ENCODE measurements at regions of chr12 and their contacts with region 1.

Region 1: DNA sequence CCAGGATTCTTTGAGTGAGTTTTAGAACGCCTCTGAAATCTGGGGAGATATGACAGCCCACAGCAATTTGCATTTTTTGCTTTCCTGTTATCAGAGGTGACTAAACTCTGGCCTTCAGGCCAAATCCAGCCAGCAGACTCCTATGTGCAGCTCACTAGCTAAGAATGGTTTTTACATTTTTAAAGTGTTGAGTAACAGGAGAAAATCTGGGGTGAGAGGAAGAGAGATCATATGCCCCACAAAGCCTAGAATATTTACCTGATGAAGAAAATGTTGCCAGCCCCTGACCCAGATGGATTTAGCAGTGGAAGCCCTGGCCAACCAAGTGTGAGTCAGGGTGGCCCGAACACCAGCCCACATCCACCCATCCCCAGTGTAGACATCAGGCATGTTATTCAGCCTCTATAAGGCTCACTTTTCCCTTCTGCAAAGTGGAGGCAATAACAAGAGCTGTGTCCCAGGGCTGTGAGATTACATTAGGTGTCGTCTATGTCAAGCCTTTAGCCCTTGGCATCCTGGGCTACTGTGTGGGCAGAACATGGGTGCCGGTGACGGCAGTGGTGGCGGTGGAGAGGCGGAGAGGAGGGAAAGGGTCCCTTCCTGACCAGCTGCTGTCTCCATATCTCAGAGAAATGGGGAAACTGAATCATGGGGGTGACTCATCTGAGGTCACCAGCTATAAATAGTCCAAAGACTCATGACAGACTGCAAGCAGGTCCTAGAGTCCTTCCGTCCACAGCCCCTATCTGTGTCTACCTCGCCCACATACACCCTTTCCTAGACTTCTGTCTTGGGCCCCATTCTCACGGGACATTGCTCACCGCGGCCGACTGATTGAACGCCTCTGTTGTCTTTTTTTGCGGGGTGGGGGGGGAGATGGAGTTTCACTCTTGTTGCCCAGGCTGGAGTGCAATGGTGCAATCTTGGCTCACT is 32.6 kb upstream of the CD9 start:
- DNase-seq: peak; percentile 99
- H3K4me3 ChIP-seq: peak overlapping the region in 1 of 3 experiments; percentile 3
- H3K27ac ChIP-seq: peak overlapping the region; percentile 100
- H3K4me1 ChIP-seq: peaks cover 49% of the 10 kb centered on the region
- H3K27me3 ChIP-seq: no peaks in the 10 kb centered on the region
- CTCF ChIP-seq: no peak
- POLR2A ChIP-seq: peak; percentile 76

Region 2: GRCh38 chr12:6020926-6021325 is 146.7 kb before region 1 on chr12:
- CTCF ChIA-PET with region 1: no interaction called
- POLR2A ChIA-PET with region 1: no interaction called
- dilution Hi-C with region 1: no loop called
- intact Hi-C with region 1: no loop called
- DNase-seq: peak; percentile 60
- H3K4me3 ChIP-seq: no peak overlapping the region
- H3K27ac ChIP-seq: peak overlapping the region; percentile 7
- H3K4me1 ChIP-seq: peaks cover 5% of the 10 kb centered on the region
- H3K27me3 ChIP-seq: no peaks in the 10 kb centered on the region
- CTCF ChIP-seq: no peak
- POLR2A ChIP-seq: no peak

Region 3: GRCh38 chr12:6074979-6075585 is 92.5 kb before region 1 on chr12:
- CTCF ChIA-PET with region 1: interaction called, 15 read pairs
- POLR2A ChIA-PET with region 1: interaction called, 5 read pairs
- dilution Hi-C with region 1: no loop called
- intact Hi-C with region 1: loop called (anchors 1 kb)
- DNase-seq: peak; percentile 49
- H3K4me3 ChIP-seq: no peak overlapping the region
- H3K27ac ChIP-seq: peak overlapping the region; percentile 80
- H3K4me1 ChIP-seq: peaks cover 86% of the 10 kb centered on the region
- H3K27me3 ChIP-seq: no peaks in the 10 kb centered on the region
- CTCF ChIP-seq: peak in 1 of 2 donors; percentile 5
- POLR2A ChIP-seq: peak; percentile 67

Region 4: DNA sequence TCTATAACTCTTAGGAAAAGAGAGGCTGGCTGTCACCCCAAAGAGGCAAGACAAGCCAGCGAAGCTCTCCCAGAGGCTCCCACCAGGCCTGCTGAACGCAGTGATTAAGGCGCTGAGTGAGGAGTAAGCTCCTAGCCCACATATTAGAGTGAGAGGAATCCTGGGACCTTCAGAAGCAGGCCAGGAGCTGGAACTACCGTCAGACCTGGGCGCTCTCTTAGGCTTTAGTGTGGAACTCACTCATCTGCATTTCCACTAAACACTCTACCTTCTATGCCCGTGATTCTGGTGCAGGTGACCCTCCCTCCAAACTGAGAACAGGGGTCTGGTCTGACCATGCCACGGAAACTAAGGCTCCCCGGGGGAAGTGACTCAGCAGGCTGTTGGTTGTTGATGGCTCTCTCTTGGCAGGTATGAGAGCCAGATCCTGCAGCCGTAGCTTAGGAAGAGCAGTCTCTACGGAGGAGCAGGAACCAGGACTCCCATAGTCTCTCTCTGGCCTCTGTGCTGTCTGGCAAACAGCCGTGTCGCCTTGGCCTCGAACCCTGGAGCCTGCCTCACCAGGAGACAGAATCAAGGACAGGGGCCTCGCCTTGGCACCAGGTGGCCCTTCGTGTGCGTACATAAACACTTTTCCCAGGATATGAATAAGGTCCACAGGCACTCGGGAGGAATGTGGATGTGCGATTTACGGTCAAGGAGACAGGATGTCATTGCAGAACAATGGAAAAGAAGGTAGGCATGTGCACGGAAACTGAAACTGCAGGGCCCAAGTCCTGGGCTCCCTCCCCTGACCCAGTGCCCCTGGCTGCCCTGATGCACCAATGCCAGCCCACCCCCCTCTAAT is 51.2 kb before region 1 on chr12:
- CTCF ChIA-PET with region 1: interaction called, 43 read pairs
- POLR2A ChIA-PET with region 1: interaction called, 13 read pairs
- dilution Hi-C with region 1: no loop called
- intact Hi-C with region 1: loop called (anchors 1 kb)
- DNase-seq: peak; percentile 95
- H3K4me3 ChIP-seq: peak overlapping the region in 1 of 3 experiments; percentile 0
- H3K27ac ChIP-seq: peak overlapping the region; percentile 100
- H3K4me1 ChIP-seq: peaks cover 91% of the 10 kb centered on the region
- H3K27me3 ChIP-seq: no peaks in the 10 kb centered on the region
- CTCF ChIP-seq: no peak
- POLR2A ChIP-seq: peak; percentile 77

Region 5: DNA sequence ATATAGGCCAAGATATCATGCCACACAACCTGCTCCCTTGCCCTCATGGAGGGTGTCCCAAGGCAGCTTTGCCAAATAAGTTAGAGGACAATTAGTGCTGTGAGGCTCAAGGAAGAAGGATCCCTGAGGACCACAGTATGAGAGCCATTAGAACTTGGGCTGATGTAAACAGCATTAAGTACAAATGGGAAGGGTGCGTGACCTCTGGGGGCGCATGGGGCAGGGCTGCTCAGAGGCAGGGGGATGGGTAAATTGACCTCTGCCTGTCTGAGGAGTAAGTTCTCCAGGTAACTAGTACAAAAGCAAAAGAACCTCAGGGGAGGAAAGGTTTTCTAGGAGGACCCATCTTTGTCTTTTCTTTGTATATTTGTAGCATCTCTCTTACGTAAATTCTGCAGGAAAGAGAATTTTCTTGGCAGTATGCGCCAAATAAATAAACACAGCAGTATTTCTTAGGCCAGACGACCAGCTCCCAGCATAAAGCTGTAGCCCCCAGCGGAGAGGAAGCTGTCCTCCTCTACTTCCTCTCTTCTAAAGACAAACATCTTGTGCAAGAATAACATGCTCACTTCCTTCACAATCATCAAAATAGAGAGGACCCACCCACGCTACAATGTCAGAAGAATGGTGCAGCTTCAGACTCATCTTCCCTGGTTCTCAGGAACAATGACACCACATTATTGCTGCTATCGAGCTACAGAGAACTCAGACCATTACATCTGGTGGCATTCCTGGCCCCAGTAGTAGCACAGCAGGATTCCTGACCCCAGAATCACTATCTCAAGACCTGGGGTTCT is 26.7 kb before region 1 on chr12:
- CTCF ChIA-PET with region 1: interaction called, 5 read pairs
- POLR2A ChIA-PET with region 1: interaction called, 6 read pairs
- dilution Hi-C with region 1: no loop called
- intact Hi-C with region 1: loop called (anchors 1 kb)
- DNase-seq: peak; percentile 85
- H3K4me3 ChIP-seq: no peak overlapping the region
- H3K27ac ChIP-seq: peak overlapping the region; percentile 86
- H3K4me1 ChIP-seq: peaks cover 42% of the 10 kb centered on the region
- H3K27me3 ChIP-seq: no peaks in the 10 kb centered on the region
- CTCF ChIP-seq: no peak
- POLR2A ChIP-seq: peak; percentile 25

Region 6: DNA sequence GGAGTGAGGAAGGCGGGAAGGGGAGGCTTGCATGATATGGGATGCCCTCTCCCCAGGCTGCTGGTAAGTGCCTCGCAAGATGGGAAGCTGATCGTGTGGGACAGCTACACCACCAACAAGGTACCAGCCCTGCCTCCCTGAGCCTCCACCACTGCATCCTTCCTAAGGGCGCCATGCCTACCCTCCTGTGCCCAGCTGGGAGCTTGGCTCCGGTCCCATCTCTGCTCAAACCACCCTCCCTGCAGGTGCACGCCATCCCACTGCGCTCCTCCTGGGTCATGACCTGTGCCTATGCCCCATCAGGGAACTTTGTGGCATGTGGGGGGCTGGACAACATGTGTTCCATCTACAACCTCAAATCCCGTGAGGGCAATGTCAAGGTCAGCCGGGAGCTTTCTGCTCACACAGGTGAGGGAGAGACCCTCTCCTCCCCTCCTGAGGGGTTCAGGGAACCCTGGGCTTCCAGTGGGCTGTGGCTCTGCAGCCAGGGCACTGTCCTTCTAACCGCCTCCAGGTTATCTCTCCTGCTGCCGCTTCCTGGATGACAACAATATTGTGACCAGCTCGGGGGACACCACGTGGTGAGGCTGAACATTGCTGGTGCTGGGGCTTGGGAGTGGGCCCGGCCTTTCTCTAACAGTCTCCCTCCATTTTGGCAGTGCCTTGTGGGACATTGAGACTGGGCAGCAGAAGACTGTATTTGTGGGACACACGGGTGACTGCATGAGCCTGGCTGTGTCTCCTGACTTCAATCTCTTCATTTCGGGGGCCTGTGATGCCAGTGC is 675.7 kb after region 1 on chr12:
- CTCF ChIA-PET with region 1: no interaction called
- POLR2A ChIA-PET with region 1: no interaction called
- dilution Hi-C with region 1: no loop called
- intact Hi-C with region 1: no loop called
- DNase-seq: no peak
- H3K4me3 ChIP-seq: no peak overlapping the region
- H3K27ac ChIP-seq: no peak overlapping the region
- H3K4me1 ChIP-seq: no peaks in the 10 kb centered on the region
- H3K27me3 ChIP-seq: no peaks in the 10 kb centered on the region
- CTCF ChIP-seq: no peak
- POLR2A ChIP-seq: no peak